CD8-positive, alpha-beta T cell (primary cell): ENCODE measurements at regions of chr10 and their contacts with region 1.

Region 1: GRCh38 chr10:70272925-70273316 is 10.9 kb downstream of the NPFFR1 start:
- DNase-seq: peak in 2 of 9 experiments; percentile 55 to 73
- ATAC-seq: peak; percentile 86
- H3K4me3 ChIP-seq: no peak overlapping the region
- H3K4me3 Mint-ChIP-seq: peak overlapping the region; percentile 57
- H3K27ac ChIP-seq: no peak overlapping the region
- H3K27ac Mint-ChIP-seq: no peak overlapping the region
- H3K4me1 ChIP-seq: no peaks in the 10 kb centered on the region
- H3K4me1 Mint-ChIP-seq: peaks cover 9% of the 10 kb centered on the region
- H3K27me3 ChIP-seq: no peaks in the 10 kb centered on the region
- H3K27me3 Mint-ChIP-seq: no peaks in the 10 kb centered on the region
- CTCF ChIP-seq: peak; percentile 73

Region 2: DNA sequence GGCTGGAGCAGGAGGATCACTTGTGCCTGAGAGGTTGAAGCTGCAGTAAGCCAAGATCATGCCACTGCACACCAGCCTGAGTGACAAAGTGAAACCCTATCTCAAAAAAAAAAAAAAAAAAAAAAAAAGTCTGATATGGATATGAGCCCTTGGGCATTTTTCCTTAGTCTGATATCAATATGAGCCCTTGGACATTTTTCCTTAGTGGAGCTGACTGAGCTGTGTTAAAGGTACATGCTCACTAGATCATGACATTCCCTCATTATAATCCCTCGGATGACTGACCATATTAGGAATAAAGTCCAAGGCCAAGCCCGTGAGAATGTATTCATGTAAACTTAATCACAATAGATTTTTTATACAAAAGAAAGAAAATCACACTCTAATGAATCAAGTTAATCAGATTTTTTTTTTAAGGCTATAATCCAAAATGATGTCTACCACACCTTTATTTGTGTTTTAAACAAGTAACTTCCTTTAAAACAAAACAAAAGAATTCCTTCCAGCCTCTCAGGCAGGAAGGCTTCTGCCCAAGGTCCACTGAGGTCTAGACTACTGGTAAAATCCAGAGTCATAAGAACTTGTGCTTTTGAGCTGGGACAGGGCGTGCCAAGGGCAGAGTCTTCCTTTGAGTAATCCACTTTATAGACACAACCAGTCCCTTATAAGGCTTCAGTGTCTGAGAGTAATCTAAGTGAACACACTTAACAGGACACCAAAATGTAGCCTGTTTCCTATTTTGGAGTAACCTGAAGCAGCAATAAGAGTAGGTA is 45.2 kb before region 1 on chr10:
- CTCF ChIA-PET with region 1: interaction called, 7 read pairs
- POLR2A ChIA-PET with region 1: no interaction called
- intact Hi-C with region 1: loop called (anchors 5 to 10 kb)
- DNase-seq: no peak
- ATAC-seq: no peak
- H3K4me3 ChIP-seq: no peak overlapping the region
- H3K4me3 Mint-ChIP-seq: no peak overlapping the region
- H3K27ac ChIP-seq: no peak overlapping the region
- H3K27ac Mint-ChIP-seq: no peak overlapping the region
- H3K4me1 ChIP-seq: peaks cover 9% of the 10 kb centered on the region
- H3K4me1 Mint-ChIP-seq: peaks cover 35% of the 10 kb centered on the region
- H3K27me3 ChIP-seq: no peaks in the 10 kb centered on the region
- H3K27me3 Mint-ChIP-seq: no peaks in the 10 kb centered on the region
- CTCF ChIP-seq: no peak

Region 3: DNA sequence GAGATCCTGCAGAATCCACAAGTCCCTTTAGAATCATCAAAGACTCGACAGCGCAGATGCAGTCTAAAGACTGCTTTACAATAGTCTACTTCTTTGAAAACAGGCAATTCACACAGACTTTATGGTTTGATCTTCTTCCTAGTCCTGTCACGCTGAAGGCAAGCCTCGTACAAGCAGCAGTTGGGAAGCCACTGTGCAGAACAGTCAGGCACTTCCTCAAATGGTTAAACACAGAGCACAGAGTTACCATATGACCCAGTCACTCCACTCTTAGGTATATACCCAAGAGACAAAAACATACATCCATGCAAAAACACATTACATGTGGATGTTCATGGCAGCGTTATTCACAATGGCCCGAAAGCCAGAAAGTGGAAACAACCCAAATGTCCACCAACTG is 68.1 kb after region 1 on chr10:
- CTCF ChIA-PET with region 1: interaction called, 3 read pairs
- POLR2A ChIA-PET with region 1: no interaction called
- intact Hi-C with region 1: loop called (anchors 5 kb)
- DNase-seq: no peak
- ATAC-seq: no peak
- H3K4me3 ChIP-seq: no peak overlapping the region
- H3K4me3 Mint-ChIP-seq: no peak overlapping the region
- H3K27ac ChIP-seq: no peak overlapping the region
- H3K27ac Mint-ChIP-seq: no peak overlapping the region
- H3K4me1 ChIP-seq: no peaks in the 10 kb centered on the region
- H3K4me1 Mint-ChIP-seq: no peaks in the 10 kb centered on the region
- H3K27me3 ChIP-seq: no peaks in the 10 kb centered on the region
- H3K27me3 Mint-ChIP-seq: no peaks in the 10 kb centered on the region
- CTCF ChIP-seq: no peak

Region 4: GRCh38 chr10:70348228-70348850 is 75.4 kb after region 1 on chr10:
- CTCF ChIA-PET with region 1: interaction called, 3 read pairs
- POLR2A ChIA-PET with region 1: no interaction called
- intact Hi-C with region 1: loop called (anchors 5 kb)
- DNase-seq: peak in 6 of 9 experiments; percentile 18 to 60 (median 32)
- ATAC-seq: peak; percentile 38
- H3K4me3 ChIP-seq: no peak overlapping the region
- H3K4me3 Mint-ChIP-seq: no peak overlapping the region
- H3K27ac ChIP-seq: no peak overlapping the region
- H3K27ac Mint-ChIP-seq: no peak overlapping the region
- H3K4me1 ChIP-seq: no peaks in the 10 kb centered on the region
- H3K4me1 Mint-ChIP-seq: no peaks in the 10 kb centered on the region
- H3K27me3 ChIP-seq: no peaks in the 10 kb centered on the region
- H3K27me3 Mint-ChIP-seq: no peaks in the 10 kb centered on the region
- CTCF ChIP-seq: peak; percentile 39

Region 5: GRCh38 chr10:70584909-70585544 is 312.1 kb after region 1 on chr10:
- CTCF ChIA-PET with region 1: no interaction called
- POLR2A ChIA-PET with region 1: no interaction called
- intact Hi-C with region 1: no loop called
- DNase-seq: peak in 2 of 9 experiments; percentile 34 to 58
- ATAC-seq: peak; percentile 94
- H3K4me3 ChIP-seq: no peak overlapping the region
- H3K4me3 Mint-ChIP-seq: no peak overlapping the region
- H3K27ac ChIP-seq: no peak overlapping the region
- H3K27ac Mint-ChIP-seq: no peak overlapping the region
- H3K4me1 ChIP-seq: peaks cover 18% of the 10 kb centered on the region
- H3K4me1 Mint-ChIP-seq: peaks cover 9% of the 10 kb centered on the region
- H3K27me3 ChIP-seq: no peaks in the 10 kb centered on the region
- H3K27me3 Mint-ChIP-seq: no peaks in the 10 kb centered on the region
- CTCF ChIP-seq: no peak